ENCODE measurements at regions of chr12 and their contacts with region 1.

Region 1: DNA sequence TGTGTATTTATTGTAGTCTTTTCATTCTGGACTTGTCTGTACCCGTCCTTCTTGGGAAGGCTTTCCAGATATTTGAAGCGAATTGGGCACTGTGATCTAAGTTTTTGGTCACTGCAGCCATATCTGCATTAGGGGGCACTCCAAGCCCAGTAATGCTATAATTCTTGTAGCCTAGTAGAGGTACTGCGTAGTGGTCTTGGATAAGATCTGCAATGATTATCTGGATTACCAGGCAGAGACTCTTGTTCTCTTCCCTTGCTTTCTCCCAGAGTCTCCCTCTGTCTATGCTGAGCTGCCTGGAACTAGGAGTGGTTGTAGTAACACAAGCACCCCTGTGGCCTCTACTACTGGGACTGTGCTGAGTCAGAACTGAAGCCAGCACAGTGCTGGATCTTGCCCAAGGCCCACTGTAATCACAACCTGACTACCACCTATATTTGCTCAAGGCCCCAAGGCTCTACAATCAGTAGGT is 30.0 kb downstream of the SLC38A2 start:
- DNase-seq: peak; percentile 66
- H3K4me3 ChIP-seq: no peak overlapping the region
- H3K27ac ChIP-seq: no peak overlapping the region
- H3K4me1 ChIP-seq: no peaks in the 10 kb centered on the region
- H3K27me3 ChIP-seq: no peaks in the 10 kb centered on the region
- CTCF ChIP-seq: peak; percentile 49
- POLR2A ChIP-seq: no peak

Region 2: GRCh38 chr12:46675736-46676135 is 333.1 kb after region 1 on chr12:
- CTCF ChIA-PET with region 1: interaction called, 3 read pairs
- POLR2A ChIA-PET with region 1: no interaction called
- dilution Hi-C with region 1: no loop called
- intact Hi-C with region 1: loop called (anchors 2 kb)
- DNase-seq: peak; percentile 54
- H3K4me3 ChIP-seq: no peak overlapping the region
- H3K27ac ChIP-seq: no peak overlapping the region
- H3K4me1 ChIP-seq: no peaks in the 10 kb centered on the region
- H3K27me3 ChIP-seq: no peaks in the 10 kb centered on the region
- CTCF ChIP-seq: peak; percentile 36 to 44
- POLR2A ChIP-seq: no peak

Region 3: GRCh38 chr12:46933947-46934346 is 591.3 kb after region 1 on chr12:
- CTCF ChIA-PET with region 1: no interaction called
- POLR2A ChIA-PET with region 1: no interaction called
- dilution Hi-C with region 1: no loop called
- intact Hi-C with region 1: loop called (anchors 1 kb)
- DNase-seq: peak; percentile 71
- H3K4me3 ChIP-seq: no peak overlapping the region
- H3K27ac ChIP-seq: no peak overlapping the region
- H3K4me1 ChIP-seq: no peaks in the 10 kb centered on the region
- H3K27me3 ChIP-seq: peaks cover 0 to 2% of the 10 kb centered on the region in 2 experiments
- CTCF ChIP-seq: peak in 1 of 2 donors; percentile 34
- POLR2A ChIP-seq: no peak

Region 4: GRCh38 chr12:47307680-47308399 is 965.2 kb after region 1 on chr12:
- CTCF ChIA-PET with region 1: no interaction called
- POLR2A ChIA-PET with region 1: no interaction called
- dilution Hi-C with region 1: no loop called
- intact Hi-C with region 1: loop called (anchors 5 kb)
- DNase-seq: peak; percentile 66
- H3K4me3 ChIP-seq: no peak overlapping the region
- H3K27ac ChIP-seq: no peak overlapping the region
- H3K4me1 ChIP-seq: no peaks in the 10 kb centered on the region
- H3K27me3 ChIP-seq: no peaks in the 10 kb centered on the region
- CTCF ChIP-seq: peak; percentile 47 to 57
- POLR2A ChIP-seq: no peak